ENCODE measurements at regions of chr13 and their contacts with region 1.

Region 1: GRCh38 chr13:39602614-39603366 is at the start of gene LHFPL6:
- DNase-seq: peak; percentile 94
- H3K4me3 ChIP-seq: peak within 1 kb of the TSS; percentile 80 to 92 (median 90)
- H3K27ac ChIP-seq: peak within 1 kb of the TSS; percentile 88 to 93 (median 92)
- H3K4me1 ChIP-seq: peaks cover 0 to 44% (median 28%) of the 10 kb centered on the region in 4 donors
- H3K27me3 ChIP-seq: no peaks in the 10 kb centered on the region
- CTCF ChIP-seq: no peak
- EP300 ChIP-seq: no peak
- POLR2A ChIP-seq: peak; percentile 51 to 67
- total RNA-seq, gene LHFPL6: 41.7 to 69.2 (median 55.2) TPM

Region 2: GRCh38 chr13:39415008-39415802 is 187.6 kb before region 1 on chr13:
- intact Hi-C with region 1: loop called (anchors 2 kb)
- DNase-seq: peak; percentile 77
- H3K4me3 ChIP-seq: no peak overlapping the region
- H3K27ac ChIP-seq: peak overlapping the region; percentile 30 to 65 (median 61)
- H3K4me1 ChIP-seq: peaks cover 0 to 34% (median 13%) of the 10 kb centered on the region in 4 donors
- H3K27me3 ChIP-seq: no peaks in the 10 kb centered on the region
- CTCF ChIP-seq: peak in 3 of 4 experiments; percentile 26 to 57 (median 47)
- EP300 ChIP-seq: peak in 1 of 4 donors; percentile 49
- POLR2A ChIP-seq: no peak

Region 3: DNA sequence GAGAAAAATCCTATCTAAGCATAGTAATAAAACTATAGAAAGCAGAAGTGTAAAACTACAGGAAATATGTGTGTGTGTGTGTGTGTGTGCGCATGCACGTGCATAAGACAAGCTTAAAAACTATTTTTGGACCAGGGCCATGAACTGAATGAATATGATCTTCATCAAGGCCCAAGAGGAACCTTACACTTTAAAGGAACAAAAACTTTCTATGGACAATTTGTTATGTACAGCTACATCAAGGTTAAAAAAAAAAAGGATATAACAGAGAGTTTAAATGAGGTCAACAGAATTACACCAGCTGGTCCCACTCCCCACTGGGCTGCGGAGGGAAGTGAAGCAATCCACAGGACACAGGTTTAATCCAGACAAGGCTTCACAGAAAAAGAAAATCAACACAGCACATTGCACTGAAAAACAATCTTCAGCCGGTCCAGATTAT is 150.9 kb before region 1 on chr13:
- intact Hi-C with region 1: loop called (anchors 2 kb)
- DNase-seq: peak; percentile 77
- H3K4me3 ChIP-seq: peak overlapping the region in 1 of 4 donors; percentile 15
- H3K27ac ChIP-seq: peak overlapping the region; percentile 4 to 82 (median 74)
- H3K4me1 ChIP-seq: peaks cover 0 to 36% (median 34%) of the 10 kb centered on the region in 4 donors
- H3K27me3 ChIP-seq: no peaks in the 10 kb centered on the region
- CTCF ChIP-seq: no peak
- EP300 ChIP-seq: peak in 1 of 4 donors; percentile 8
- POLR2A ChIP-seq: no peak

Region 4: DNA sequence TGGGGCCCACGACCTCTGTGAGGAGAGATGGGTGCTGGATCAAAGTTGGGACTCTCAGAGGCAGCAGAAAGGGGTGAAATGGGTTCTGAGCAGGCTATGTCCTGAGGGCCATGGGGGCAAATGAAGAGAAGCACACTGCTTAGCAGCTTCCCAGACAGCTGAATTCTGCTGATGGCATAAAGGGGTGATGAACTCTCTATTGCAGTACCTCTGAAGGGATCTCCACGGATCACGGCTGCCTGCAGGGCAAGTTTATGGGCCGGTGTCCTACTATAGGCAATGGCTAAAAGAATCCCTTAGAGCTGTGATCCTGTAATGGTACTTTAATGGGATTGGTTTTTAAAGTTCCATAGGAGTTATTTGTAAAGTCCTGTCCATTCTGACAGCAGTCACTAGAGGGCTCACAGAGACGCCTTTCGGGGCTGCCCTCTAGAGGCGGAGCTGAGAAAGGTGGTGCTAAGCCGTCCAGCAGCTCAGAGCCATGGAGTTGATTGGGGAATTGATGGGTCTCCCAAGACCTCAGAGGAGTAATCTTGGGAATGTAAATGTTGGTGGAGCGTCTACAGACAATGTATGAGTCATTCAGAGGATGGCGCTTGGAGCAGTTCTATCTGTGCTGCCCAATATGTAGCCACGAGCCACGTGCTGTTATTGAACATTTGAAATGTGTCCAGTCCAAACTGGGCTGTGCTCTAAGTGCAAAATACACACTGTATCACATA is 339.9 kb after region 1 on chr13:
- intact Hi-C with region 1: no loop called
- DNase-seq: peak; percentile 69
- H3K4me3 ChIP-seq: no peak overlapping the region
- H3K27ac ChIP-seq: no peak overlapping the region
- H3K4me1 ChIP-seq: no peaks in the 10 kb centered on the region
- H3K27me3 ChIP-seq: no peaks in the 10 kb centered on the region
- CTCF ChIP-seq: peak; percentile 35 to 85 (median 81)
- EP300 ChIP-seq: no peak
- POLR2A ChIP-seq: no peak

Measured in sigmoid colon (tissue), 7 donors.